ENCODE measurements at regions of chr11 and their contacts with region 1.

Region 1: GRCh38 chr11:27720277-27720830 is 20.1 kb upstream of the BDNF start:
- DNase-seq: no peak
- H3K4me3 ChIP-seq: peak overlapping the region; percentile 90
- CTCF ChIP-seq: peak; percentile 19

Region 2: GRCh38 chr11:27416193-27417187 is 303.9 kb before region 1 on chr11:
- CTCF ChIA-PET with region 1: no interaction called
- POLR2A ChIA-PET with region 1: no interaction called
- DNase-seq: no peak
- H3K4me3 ChIP-seq: no peak overlapping the region
- CTCF ChIP-seq: no peak

Region 3: DNA sequence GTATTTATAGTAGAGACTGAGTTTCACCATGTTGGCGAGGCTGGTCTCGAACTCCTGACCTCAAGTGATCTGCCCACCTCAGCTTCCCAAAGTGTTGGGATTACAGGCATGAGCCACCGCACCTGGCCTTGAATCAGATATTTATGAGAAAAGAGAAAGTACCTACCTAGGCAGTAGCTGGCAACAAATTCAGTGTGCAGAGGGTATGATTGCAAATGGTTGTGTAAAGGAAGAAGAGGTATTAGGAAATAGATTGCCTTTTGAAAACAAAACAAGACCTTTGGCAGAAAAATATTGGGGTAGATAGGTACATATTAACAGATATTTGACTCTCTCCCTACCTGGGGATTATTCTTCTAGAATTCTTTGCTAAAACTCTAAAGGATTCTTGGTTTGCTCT is 175.3 kb before region 1 on chr11:
- CTCF ChIA-PET with region 1: no interaction called
- POLR2A ChIA-PET with region 1: no interaction called
- DNase-seq: no peak
- H3K4me3 ChIP-seq: no peak overlapping the region
- CTCF ChIP-seq: no peak

Region 4: DNA sequence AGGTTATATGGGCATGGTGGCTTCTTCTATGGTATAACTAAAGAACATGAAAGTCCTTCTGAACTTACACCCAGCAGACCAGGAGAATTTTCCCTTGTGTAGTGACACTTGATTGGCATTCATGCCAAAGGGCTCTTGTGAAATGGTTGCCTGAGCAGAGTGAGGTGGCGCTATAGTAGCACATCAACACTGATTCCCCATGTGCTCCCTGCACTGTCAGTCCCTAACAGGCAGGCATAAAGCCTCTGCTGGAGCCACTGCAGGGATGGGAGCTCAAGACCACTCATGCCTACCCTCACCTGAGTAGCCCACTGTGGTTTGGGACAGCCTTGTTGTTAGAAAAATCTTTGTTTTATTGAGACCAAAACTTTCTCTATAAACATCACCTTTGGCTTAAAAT is 121.1 kb before region 1 on chr11:
- CTCF ChIA-PET with region 1: no interaction called
- POLR2A ChIA-PET with region 1: no interaction called
- DNase-seq: no peak
- H3K4me3 ChIP-seq: no peak overlapping the region
- CTCF ChIP-seq: no peak

Region 5: GRCh38 chr11:27754035-27755017 is 34.0 kb after region 1 on chr11:
- CTCF ChIA-PET with region 1: no interaction called
- POLR2A ChIA-PET with region 1: no interaction called
- DNase-seq: peak; percentile 10
- H3K4me3 ChIP-seq: no peak overlapping the region
- CTCF ChIP-seq: no peak

Region 6: DNA sequence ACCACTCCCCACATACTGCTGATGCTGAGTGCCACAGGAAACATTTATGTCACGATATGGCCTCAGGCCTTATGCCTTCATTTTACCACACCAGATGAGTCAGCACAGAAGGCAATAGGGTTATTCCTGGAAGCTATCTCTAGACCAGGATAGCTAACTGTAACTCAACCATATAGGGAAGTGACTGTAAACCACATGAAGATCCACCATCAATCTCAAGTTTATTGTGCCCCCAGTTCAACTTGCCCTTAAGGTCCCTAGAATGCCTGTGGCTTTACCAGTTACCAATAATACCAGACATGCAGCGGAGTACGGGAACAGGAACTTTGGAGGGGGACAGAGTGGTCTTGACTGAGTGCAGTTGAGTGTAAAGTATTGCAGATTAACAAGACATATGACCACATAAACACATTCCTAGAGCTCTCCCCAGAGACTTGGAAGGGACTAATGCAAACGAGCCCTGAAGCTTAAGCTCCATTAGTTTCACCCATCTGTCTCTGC is 206.7 kb after region 1 on chr11:
- CTCF ChIA-PET with region 1: interaction called, 3 read pairs
- POLR2A ChIA-PET with region 1: interaction called, 11 read pairs
- DNase-seq: peak; percentile 99
- H3K4me3 ChIP-seq: no peak overlapping the region
- CTCF ChIP-seq: no peak

Region 7: GRCh38 chr11:27934830-27935145 is 214.4 kb after region 1 on chr11:
- CTCF ChIA-PET with region 1: interaction called, 4 read pairs
- POLR2A ChIA-PET with region 1: interaction called, 23 read pairs
- DNase-seq: peak; percentile 93
- H3K4me3 ChIP-seq: no peak overlapping the region
- CTCF ChIP-seq: no peak

Region 8: DNA sequence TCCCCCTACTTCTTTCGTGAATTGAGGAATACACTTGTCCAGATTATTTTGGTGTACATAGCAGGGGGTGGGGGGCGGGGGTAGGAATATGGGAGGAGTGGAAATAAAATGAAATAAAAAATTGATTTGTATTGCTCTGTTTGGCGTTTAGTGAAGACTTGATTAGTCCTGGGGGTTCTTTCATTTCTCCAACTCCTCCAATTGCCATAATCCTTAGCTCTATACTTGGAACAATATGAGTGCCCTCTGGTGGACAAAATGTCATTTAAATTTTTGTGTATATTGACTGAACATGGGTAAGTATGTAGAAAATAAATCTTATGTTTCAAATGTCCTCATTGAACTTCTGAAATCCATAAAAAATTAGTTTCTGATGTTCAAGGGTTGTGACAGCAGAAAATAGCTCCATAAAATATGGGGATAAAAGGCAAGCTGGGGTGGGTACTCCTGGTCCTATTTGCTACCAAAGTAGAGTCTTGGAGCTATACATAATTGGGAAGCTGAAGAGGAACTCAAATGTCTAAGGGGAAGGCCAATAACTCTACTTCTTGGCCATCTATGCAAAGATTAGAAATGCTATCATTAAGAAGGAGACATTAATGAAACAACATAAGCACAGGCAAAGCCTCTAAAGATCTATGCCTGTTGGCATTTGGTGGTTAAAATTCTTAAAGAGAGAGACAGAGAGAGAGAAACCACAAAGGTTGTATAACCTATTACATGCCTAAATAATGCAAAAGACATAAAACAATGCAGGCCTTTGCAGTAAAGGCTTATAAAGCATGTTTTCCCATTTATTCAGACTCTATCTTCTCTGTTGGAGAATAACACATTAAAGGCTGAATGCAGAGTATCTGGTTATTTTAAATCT is 809.4 kb after region 1 on chr11:
- CTCF ChIA-PET with region 1: interaction called, 13 read pairs
- POLR2A ChIA-PET with region 1: no interaction called
- DNase-seq: no peak
- H3K4me3 ChIP-seq: no peak overlapping the region
- CTCF ChIP-seq: no peak

Measured in AG04449 (cell line).